ENCODE measurements at regions of chr3 and their contacts with region 1.

Region 1: GRCh38 chr3:32684800-32685542 is at the start of gene CNOT10:
- DNase-seq: peak; percentile 91 to 98 (median 96)
- ATAC-seq: peak; percentile 90
- H3K4me3 ChIP-seq: peak within 1 kb of the TSS; percentile 60 to 82
- H3K4me3 Mint-ChIP-seq: peak within 1 kb of the TSS; percentile 91
- H3K27ac ChIP-seq: peak within 1 kb of the TSS; percentile 84 to 88
- H3K27ac Mint-ChIP-seq: peak within 1 kb of the TSS; percentile 97
- H3K4me1 ChIP-seq: peaks cover 24% of the 10 kb centered on the region
- H3K4me1 Mint-ChIP-seq: peaks cover 37% of the 10 kb centered on the region
- H3K27me3 ChIP-seq: no peaks in the 10 kb centered on the region
- H3K27me3 Mint-ChIP-seq: no peaks in the 10 kb centered on the region
- CTCF ChIP-seq: peak; percentile 27
- total RNA-seq, gene CNOT10: 28.0 to 31.1 TPM

Region 2: DNA sequence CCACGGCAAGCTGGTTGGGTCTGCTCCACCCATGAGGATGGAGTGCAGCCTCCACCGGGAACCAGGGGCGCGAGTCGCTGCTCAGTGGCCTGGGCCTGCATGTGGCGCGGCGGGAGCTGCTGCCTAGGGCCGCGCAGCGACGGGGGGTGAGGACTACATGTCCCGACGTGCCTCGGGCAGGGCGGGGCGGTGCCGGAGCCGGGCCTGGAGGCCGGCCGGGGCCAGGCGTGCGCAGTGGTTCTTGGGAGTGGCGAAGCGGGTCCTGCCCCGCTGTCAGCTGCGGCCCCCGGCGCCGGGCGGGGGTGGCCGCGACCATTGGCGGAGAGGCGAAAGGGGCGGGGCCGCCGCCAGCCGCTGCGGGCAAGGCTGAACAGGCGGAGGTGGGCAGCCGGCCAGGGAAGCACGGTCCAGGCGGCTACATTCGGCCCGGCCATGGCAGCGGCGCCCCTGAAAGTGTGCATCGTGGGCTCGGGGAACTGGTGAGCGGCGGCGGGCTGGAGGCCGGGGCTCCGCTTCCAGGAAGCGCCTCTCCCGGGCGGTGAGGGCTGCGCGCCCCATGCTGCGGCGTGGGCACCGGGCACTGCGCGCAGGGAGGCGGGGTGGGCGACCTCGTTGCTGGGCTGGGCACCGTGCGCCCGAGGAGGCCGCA is 578.6 kb before region 1 on chr3 and contains the start of gene GPD1L:
- CTCF ChIA-PET with region 1: no interaction called
- POLR2A ChIA-PET with region 1: no interaction called
- intact Hi-C with region 1: loop called (anchors 2 to 10 kb)
- DNase-seq: peak; percentile 84 to 95 (median 90)
- ATAC-seq: peak; percentile 97
- H3K4me3 ChIP-seq: peak within 1 kb of the TSS; percentile 70 to 80
- H3K4me3 Mint-ChIP-seq: peak within 1 kb of the TSS; percentile 91
- H3K27ac ChIP-seq: peak within 1 kb of the TSS; percentile 46 to 57
- H3K27ac Mint-ChIP-seq: peak within 1 kb of the TSS; percentile 67
- H3K4me1 ChIP-seq: peaks cover 13% of the 10 kb centered on the region
- H3K4me1 Mint-ChIP-seq: peaks cover 33% of the 10 kb centered on the region
- H3K27me3 ChIP-seq: no peaks in the 10 kb centered on the region
- H3K27me3 Mint-ChIP-seq: no peaks in the 10 kb centered on the region
- CTCF ChIP-seq: no peak
- total RNA-seq, gene GPD1L: 9.5 to 9.8 TPM

Region 3: DNA sequence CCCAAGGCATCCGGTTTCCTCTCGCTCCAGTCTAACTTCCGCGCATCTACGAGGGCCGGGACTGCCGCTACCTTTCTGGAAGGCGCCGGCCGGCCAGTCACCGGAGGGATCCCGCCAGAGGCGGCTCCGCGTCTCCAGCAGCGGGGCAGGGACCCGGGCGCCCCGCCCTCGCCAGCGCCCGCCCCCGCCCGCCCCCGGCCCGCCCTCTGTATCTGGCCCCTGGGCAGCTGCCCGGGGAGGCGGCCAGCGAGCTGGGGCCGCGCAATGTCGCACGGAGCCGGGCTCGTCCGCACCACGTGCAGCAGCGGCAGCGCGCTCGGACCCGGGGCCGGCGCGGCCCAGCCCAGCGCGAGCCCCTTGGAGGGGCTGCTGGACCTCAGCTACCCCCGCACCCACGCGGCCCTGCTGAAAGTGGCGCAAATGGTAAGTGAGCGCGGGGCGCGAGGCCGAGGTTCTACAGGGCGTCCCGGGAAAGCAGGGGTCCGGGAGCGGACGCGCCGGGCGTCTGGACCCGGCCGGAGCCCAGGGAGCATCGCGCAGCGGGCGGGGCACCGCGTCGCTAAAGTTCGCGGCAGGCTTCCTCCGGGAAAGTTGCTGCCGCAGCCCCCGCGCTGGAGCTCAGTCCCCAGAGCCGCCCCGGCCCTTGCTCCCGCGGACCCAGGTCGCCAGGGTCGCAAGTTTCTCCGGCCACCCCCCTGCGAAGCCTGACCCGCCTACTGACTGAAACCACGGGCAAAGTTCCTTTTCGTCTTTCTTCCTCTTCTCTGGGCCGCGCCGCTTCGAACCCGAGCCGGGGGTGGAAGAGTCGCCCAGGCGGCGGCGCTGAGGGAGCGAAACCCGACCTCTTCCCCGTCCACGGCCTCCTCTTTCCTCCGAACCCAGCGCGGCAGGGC is 293.1 kb before region 1 on chr3 and contains the start of gene CMTM7:
- CTCF ChIA-PET with region 1: no interaction called
- POLR2A ChIA-PET with region 1: no interaction called
- intact Hi-C with region 1: loop called (anchors 5 to 10 kb)
- DNase-seq: peak; percentile 26 to 79 (median 61)
- ATAC-seq: peak; percentile 63
- H3K4me3 ChIP-seq: peak within 1 kb of the TSS; percentile 69 to 70
- H3K4me3 Mint-ChIP-seq: peak within 1 kb of the TSS; percentile 97
- H3K27ac ChIP-seq: peak within 1 kb of the TSS; percentile 73 to 77
- H3K27ac Mint-ChIP-seq: peak within 1 kb of the TSS; percentile 98
- H3K4me1 ChIP-seq: peaks cover 29% of the 10 kb centered on the region
- H3K4me1 Mint-ChIP-seq: peaks cover 65% of the 10 kb centered on the region
- H3K27me3 ChIP-seq: no peaks in the 10 kb centered on the region
- H3K27me3 Mint-ChIP-seq: no peaks in the 10 kb centered on the region
- CTCF ChIP-seq: no peak
- total RNA-seq, gene CMTM7: 18.8 to 19.5 TPM

Region 4: DNA sequence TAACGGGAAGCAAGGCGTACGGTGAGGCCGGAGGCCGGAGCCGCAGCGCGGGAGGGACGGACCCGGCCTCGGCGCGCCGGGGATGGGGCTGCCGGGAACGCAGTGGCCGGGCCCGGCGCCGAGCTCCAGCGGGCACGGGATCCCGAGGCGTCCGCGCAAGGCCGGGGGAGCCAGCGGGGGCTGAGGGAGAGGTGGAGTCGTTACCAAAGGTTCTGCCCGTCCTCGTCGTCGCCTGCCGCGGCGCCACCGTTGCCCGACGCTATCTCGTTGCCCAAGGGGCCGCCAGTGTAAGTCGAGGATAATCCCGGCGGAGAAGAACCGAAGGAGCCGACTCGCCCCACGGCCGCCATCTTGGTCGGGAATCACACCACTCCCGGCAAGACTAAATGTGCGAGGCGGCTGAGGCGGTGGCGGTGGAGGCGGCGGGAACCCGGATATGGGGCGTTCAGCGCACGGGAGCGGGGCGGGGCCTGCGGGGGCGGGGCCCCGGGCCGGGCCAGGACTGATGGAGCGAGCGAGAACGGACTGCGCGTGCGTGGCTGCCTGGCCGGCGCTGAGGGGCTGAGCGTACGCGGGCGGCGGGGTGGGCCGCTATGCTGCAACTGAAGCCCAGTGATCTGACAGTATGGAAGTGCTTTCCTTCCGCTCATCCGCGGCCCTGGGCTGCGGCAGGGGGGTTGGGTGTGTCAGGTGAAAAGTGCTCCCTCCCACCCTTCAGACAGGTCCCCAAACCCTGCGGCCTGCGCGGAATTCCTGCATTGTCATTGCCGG is 114.4 kb before region 1 on chr3 and contains the start of gene DYNC1LI1:
- CTCF ChIA-PET with region 1: no interaction called
- POLR2A ChIA-PET with region 1: no interaction called
- intact Hi-C with region 1: loop called (anchors 1 to 2 kb)
- DNase-seq: peak; percentile 84 to 97 (median 93)
- ATAC-seq: peak; percentile 95
- H3K4me3 ChIP-seq: peak within 1 kb of the TSS; percentile 72 to 96
- H3K4me3 Mint-ChIP-seq: peak within 1 kb of the TSS; percentile 94
- H3K27ac ChIP-seq: peak within 1 kb of the TSS; percentile 71 to 87
- H3K27ac Mint-ChIP-seq: peak within 1 kb of the TSS; percentile 94
- H3K4me1 ChIP-seq: peaks cover 8% of the 10 kb centered on the region
- H3K4me1 Mint-ChIP-seq: peaks cover 34% of the 10 kb centered on the region
- H3K27me3 ChIP-seq: no peaks in the 10 kb centered on the region
- H3K27me3 Mint-ChIP-seq: no peaks in the 10 kb centered on the region
- CTCF ChIP-seq: no peak
- total RNA-seq, gene DYNC1LI1: 29.2 to 36.1 TPM

Region 5: GRCh38 chr3:33113772-33114621 is 429.0 kb after region 1 on chr3 and contains the start of gene CRTAP:
- CTCF ChIA-PET with region 1: no interaction called
- POLR2A ChIA-PET with region 1: no interaction called
- intact Hi-C with region 1: loop called in 1 of 2 experiments (anchors 5 kb)
- DNase-seq: peak; percentile 70 to 95 (median 87)
- ATAC-seq: peak; percentile 87
- H3K4me3 ChIP-seq: peak within 1 kb of the TSS; percentile 60 to 80
- H3K4me3 Mint-ChIP-seq: peak within 1 kb of the TSS; percentile 91
- H3K27ac ChIP-seq: peak within 1 kb of the TSS; percentile 41 to 80
- H3K27ac Mint-ChIP-seq: peak within 1 kb of the TSS; percentile 89
- H3K4me1 ChIP-seq: peaks cover 7% of the 10 kb centered on the region
- H3K4me1 Mint-ChIP-seq: peaks cover 36% of the 10 kb centered on the region
- H3K27me3 ChIP-seq: no peaks in the 10 kb centered on the region
- H3K27me3 Mint-ChIP-seq: no peaks in the 10 kb centered on the region
- CTCF ChIP-seq: no peak
- total RNA-seq, gene CRTAP: 21.7 to 23.5 TPM

Region 6: GRCh38 chr3:33717866-33718594 is 1033.1 kb after region 1 on chr3 and contains the start of gene CLASP2:
- CTCF ChIA-PET with region 1: no interaction called
- POLR2A ChIA-PET with region 1: no interaction called
- intact Hi-C with region 1: loop called (anchors 10 kb)
- DNase-seq: peak; percentile 69 to 95 (median 84)
- ATAC-seq: peak; percentile 79
- H3K4me3 ChIP-seq: peak within 1 kb of the TSS; percentile 81 to 95
- H3K4me3 Mint-ChIP-seq: peak within 1 kb of the TSS; percentile 95
- H3K27ac ChIP-seq: peak within 1 kb of the TSS; percentile 92 to 95
- H3K27ac Mint-ChIP-seq: peak within 1 kb of the TSS; percentile 98
- H3K4me1 ChIP-seq: peaks cover 14% of the 10 kb centered on the region
- H3K4me1 Mint-ChIP-seq: peaks cover 11% of the 10 kb centered on the region
- H3K27me3 ChIP-seq: no peaks in the 10 kb centered on the region
- H3K27me3 Mint-ChIP-seq: no peaks in the 10 kb centered on the region
- CTCF ChIP-seq: no peak
- total RNA-seq, gene CLASP2: 62.6 to 63.2 TPM